ENCODE measurements at regions of chr9 and their contacts with region 1.

Region 1: GRCh38 chr9:928362-929042 is 48.0 kb upstream of the DMRT3 start:
- DNase-seq: no peak
- H3K4me3 ChIP-seq: no peak overlapping the region
- H3K27ac ChIP-seq: no peak overlapping the region
- H3K4me1 ChIP-seq: no peaks in the 10 kb centered on the region
- H3K27me3 ChIP-seq: no peaks in the 10 kb centered on the region
- CTCF ChIP-seq: no peak
- POLR2A ChIP-seq: no peak

Region 2: DNA sequence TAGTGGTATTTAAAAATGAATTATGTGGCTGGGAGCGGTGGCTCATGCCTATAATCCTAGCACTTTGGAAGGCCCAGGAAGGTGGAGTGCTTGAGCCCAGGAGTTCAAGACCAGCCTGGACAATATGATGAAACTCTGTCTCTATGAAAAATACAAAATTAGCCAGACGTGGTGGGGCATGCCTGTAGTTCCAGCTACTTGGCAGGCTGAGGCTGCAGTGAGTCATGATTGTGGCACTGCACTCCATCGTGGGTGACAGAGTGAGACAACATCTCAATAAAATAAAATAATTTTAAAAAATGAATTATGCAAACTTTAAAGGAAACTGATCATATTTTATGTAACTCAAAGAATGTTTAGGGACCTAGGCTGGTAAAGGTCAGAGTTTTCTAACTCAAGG is 397.8 kb before region 1 on chr9:
- intact Hi-C with region 1: no loop called
- DNase-seq: peak in 1 of 2 donors; percentile 68
- H3K4me3 ChIP-seq: no peak overlapping the region
- H3K27ac ChIP-seq: peak overlapping the region; percentile 21 to 26
- H3K4me1 ChIP-seq: no peaks in the 10 kb centered on the region
- H3K27me3 ChIP-seq: no peaks in the 10 kb centered on the region
- CTCF ChIP-seq: no peak
- POLR2A ChIP-seq: no peak

Region 3: DNA sequence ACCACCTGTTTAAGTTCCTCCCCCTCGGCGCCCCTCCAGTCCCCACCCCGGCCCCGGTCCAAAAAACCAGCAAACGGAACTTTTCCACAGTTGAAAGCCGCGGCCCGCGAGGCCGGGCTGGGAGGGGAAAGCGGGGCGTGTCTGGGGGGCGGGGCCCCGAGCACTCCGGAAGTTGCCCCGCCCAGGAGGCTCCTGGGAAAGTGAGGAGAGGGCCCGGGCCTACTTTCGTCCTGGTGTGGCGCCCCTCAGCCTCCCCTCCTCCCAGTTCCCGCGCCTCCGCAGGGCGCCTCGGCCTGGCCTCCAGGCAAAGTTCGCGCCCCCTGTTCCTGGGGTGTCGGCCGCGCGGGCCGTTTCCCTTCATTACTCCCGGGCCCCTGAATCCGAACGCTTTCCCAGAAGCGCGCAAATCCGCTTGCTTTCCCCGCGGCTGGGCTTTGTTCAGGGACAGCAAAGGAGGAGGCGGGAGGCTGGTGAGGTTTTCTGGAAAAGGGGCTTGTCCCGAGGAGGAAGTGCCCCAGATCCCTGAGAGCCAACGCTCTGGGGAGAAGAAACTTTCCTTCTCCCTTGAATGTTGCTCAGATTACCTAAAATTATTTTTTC is 43.5 kb after region 1 on chr9:
- intact Hi-C with region 1: no loop called
- DNase-seq: no peak
- H3K4me3 ChIP-seq: peak overlapping the region; percentile 48 to 71 (median 52)
- H3K27ac ChIP-seq: no peak overlapping the region
- H3K4me1 ChIP-seq: peaks cover 0 to 10% of the 10 kb centered on the region in 2 donors
- H3K27me3 ChIP-seq: peaks cover 24 to 100% of the 10 kb centered on the region in 2 donors
- CTCF ChIP-seq: no peak
- POLR2A ChIP-seq: no peak

Region 4: DNA sequence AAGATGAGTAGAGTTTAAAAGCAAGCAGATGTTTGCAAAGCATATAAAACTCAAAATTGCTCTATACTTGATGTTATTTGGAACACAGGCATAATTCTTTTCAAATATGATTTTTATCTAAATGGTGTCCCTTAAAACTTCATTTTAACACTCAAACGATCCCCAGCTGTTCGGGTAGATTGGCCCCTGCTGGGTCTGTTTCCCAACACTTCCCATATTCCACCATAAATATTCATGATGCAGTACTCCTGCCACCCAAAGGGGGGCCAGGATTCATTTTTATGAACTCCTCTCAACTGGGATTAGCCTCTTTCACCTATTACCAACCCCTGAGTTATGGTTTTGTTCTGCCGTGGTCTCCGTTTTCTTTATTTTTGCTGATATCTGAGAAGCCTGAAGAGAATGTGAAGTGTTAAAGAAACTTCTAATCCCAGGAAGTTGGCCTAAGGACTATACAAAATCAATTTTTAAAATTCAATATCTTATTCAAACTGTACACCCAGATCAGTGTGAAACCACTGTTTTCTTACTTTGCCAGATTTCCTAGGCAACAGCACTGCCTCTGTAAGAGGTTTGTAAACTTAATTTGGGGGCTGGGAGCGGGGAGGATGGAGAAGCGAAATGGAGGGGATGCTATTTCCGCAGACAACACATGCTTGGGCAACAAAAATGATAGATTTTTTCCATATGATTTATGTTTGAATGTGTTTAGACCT is 505.7 kb after region 1 on chr9:
- intact Hi-C with region 1: loop called (anchors 5 kb)
- DNase-seq: no peak
- H3K4me3 ChIP-seq: no peak overlapping the region
- H3K27ac ChIP-seq: no peak overlapping the region
- H3K4me1 ChIP-seq: no peaks in the 10 kb centered on the region
- H3K27me3 ChIP-seq: no peaks in the 10 kb centered on the region
- CTCF ChIP-seq: no peak
- POLR2A ChIP-seq: no peak